ENCODE measurements at regions of chr9 and their contacts with region 1.

Region 1: DNA sequence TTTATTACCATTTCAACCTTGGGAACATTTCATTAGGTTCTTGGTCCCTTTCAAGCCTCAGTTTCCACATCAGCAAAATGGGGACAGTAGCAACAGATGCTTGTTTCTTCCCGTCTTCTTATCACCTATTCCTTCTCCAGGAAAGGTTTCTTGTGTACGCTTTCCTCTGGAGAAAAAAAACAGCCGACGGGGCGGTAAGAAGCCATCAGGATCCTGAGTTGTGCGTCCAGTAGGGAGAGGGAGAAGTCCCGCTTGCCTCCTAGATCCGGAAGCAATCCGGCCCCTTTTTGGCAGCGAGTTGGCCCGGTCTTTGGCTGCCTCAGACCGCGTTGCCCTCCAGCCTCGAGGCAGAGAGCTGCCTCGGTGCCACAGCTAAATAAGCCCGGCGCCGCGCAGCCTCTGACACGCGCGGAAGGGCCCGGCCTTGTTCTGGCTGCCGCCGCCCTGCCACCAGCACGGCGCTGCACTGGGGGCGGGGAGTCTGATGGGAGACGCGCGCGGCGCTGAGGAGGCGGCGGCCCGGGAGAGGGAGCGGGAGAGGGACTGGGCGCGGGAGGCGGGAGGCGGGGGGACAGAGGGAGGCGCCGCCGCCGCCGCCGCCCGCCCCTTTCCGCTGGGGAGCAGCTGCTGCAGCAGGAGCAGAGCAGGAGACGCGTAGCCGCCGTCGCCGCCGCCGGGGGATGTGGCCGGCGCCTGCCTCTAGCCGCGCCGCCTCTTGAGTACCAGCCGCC is at the start of gene SLC44A1:
- DNase-seq: peak; percentile 94
- ATAC-seq: peak; percentile 95
- H3K4me3 Mint-ChIP-seq: peak within 1 kb of the TSS; percentile 87
- H3K27ac Mint-ChIP-seq: peak within 1 kb of the TSS; percentile 72
- H3K4me1 Mint-ChIP-seq: peaks cover 18% of the 10 kb centered on the region
- H3K27me3 Mint-ChIP-seq: peaks cover 68% of the 10 kb centered on the region
- total RNA-seq, gene SLC44A1: 12.4 to 13.8 TPM

Region 2: DNA sequence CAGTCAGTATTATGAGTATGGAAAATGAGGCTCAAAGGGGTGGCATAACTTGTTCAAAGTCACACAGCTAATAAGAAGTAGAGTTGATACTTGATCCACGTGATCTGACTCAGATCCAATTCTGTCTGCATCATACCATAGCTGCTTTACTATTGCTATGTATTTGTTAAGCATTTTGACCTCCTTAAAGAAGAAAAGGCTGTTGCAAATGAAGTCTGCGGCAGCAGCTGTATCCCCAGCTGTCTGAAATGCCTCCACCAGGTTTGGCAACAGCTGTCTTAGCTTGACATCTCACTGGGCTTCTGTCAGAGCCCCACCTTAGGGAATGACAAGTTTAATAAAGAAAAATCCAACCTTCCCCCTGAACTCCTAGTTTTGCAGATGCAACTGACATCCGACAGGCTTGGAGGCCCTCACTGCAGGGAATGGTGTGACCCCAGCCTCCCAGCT is 75.3 kb before region 1 on chr9:
- POLR2A ChIA-PET with region 1: no interaction called
- DNase-seq: no peak
- ATAC-seq: no peak
- H3K4me3 Mint-ChIP-seq: no peak overlapping the region
- H3K27ac Mint-ChIP-seq: no peak overlapping the region
- H3K4me1 Mint-ChIP-seq: no peaks in the 10 kb centered on the region
- H3K27me3 Mint-ChIP-seq: no peaks in the 10 kb centered on the region

Region 3: DNA sequence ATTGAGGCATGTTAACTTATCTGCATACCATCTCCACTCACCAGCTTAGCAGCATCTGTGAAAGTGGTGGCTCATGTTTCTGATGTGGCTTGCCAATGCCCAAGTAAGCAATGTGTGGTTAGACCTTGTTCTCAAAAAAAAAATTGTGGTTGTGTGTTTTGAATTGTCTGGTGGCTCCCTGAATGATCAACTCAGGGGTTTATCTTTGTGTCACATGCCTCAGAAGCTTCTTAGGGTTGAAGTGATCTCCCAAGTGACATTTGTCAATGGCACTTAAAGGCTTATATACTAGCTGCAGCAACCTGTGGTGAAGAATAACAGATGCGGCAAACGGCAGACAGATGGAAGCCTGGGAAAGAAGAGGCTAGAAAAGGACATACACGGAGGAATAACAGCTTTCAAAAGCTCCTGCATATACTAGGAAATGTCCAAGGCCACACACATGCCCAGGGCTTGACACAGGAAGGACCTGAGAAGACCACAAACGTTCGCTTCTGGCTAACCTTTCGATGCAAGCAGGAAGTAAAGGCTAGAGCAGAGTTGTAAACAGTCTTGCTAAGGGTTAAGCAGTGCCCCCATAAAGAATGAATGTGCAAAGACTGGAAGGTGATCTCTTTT is 161.5 kb after region 1 on chr9:
- POLR2A ChIA-PET with region 1: interaction called, 23 read pairs
- DNase-seq: peak; percentile 58
- ATAC-seq: peak; percentile 93
- H3K4me3 Mint-ChIP-seq: peak overlapping the region; percentile 80
- H3K27ac Mint-ChIP-seq: peak overlapping the region; percentile 86
- H3K4me1 Mint-ChIP-seq: peaks cover 39% of the 10 kb centered on the region
- H3K27me3 Mint-ChIP-seq: peaks cover 71% of the 10 kb centered on the region

Measured in activated naive CD8-positive, alpha-beta T cell treated with anti-CD3 and anti-CD28 coated beads, Interleukin-2, amount 10 ng/mL, durations not matched to agents 7 days and 5 days (primary cell).